BJ (cell line): ENCODE measurements at regions of chr1 and their contacts with region 1.

Region 1: DNA sequence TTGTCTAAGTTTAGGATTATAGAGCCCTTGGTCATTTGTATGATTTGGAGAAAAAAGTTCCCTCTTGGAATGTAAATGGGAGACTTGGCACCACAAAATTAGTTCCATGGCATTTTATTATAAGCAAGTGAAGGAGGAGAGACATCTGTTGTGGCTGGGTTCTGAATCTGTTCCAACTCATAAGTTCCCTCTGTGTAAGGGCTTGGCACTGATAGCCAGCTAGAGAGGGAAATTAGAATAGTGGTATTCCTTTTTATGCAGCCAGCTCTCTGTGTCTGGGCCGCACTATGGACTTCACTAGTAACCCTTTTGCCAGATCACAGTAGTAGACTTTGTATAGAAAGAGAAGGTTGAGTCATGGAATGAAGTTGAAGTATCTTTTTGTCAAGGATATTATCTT is 31.1 kb downstream of the GNAI3 start:
- DNase-seq: no peak
- H3K4me3 ChIP-seq: no peak overlapping the region
- H3K27me3 ChIP-seq: no peaks in the 10 kb centered on the region
- CTCF ChIP-seq: no peak

Region 2: GRCh38 chr1:109567877-109568672 is 11.4 kb before region 1 on chr1:
- CTCF ChIA-PET with region 1: no interaction called
- POLR2A ChIA-PET with region 1: interaction called, 15 read pairs
- DNase-seq: no peak
- H3K4me3 ChIP-seq: no peak overlapping the region
- H3K27me3 ChIP-seq: no peaks in the 10 kb centered on the region
- CTCF ChIP-seq: no peak

Region 3: GRCh38 chr1:109655601-109656519 is 76.4 kb after region 1 on chr1 and contains the start of gene GSTM4:
- CTCF ChIA-PET with region 1: no interaction called
- POLR2A ChIA-PET with region 1: interaction called, 10 read pairs
- DNase-seq: no peak
- H3K4me3 ChIP-seq: peak within 1 kb of the TSS; percentile 66
- H3K27me3 ChIP-seq: peaks cover 2% of the 10 kb centered on the region; the same call in 1 of the 2 replicates
- CTCF ChIP-seq: peak; percentile 46
- polyA plus RNA-seq, gene GSTM4: 28.4 and 28.5 TPM in 2 replicates